RWPE1 (cell line): ENCODE measurements at regions of chr11 and their contacts with region 1.

Region 1: GRCh38 chr11:43845816-43846215 is 34.8 kb upstream of the ALKBH3 start:
- DNase-seq: no peak
- H3K27ac ChIP-seq: no peak overlapping the region
- CTCF ChIP-seq: no peak

Region 2: DNA sequence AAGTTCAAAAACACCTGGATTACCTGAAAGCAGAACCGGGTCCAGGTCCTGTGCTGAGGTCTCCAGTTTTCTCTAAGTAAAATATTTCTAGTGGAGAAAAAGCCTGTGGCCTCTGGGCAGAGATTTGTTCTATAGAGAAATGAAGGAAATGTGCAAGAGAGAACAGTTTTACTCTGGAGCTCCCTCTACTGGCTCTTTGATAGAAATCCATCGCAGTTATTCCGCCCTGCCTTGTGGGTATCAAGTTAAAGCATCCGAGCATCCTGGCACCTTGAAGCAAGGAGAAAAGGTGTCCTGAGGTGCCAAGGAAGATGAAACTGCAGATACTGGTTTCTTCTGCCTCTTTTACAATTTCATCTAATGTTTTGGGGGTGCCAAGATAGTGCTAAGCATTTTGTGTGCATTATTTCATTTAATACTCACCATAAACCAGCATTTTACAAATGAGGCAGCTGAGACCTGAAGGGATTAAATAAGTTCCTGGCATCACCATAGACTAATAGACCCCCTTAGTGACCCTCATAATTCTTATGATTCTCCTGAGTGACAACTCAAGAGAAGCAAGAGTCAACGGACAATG is 278.3 kb before region 1 on chr11:
- CTCF ChIA-PET with region 1: interaction called, 11 read pairs
- POLR2A ChIA-PET with region 1: no interaction called
- DNase-seq: peak; percentile 62
- H3K27ac ChIP-seq: no peak overlapping the region
- CTCF ChIP-seq: peak; percentile 74

Region 3: DNA sequence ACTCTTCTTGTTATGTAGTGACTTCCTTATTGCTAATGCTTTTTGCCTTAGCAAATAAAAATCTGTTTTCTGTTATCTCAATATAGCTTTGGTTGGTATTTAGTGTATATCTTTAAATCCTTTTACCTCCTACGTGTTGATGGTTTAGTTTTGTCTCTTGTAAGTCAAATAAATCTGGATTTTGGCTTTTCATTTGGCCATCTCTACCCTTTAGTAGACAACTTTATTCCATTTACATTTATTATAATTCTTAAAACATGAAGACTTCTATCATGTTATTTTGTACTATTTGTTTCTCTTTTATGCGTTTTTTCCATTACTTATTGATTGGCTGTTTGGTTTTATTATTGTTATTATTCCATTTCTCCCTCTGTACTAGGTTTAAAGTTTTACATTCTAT is 15.3 kb after region 1 on chr11:
- CTCF ChIA-PET with region 1: no interaction called
- POLR2A ChIA-PET with region 1: no interaction called
- DNase-seq: no peak
- H3K27ac ChIP-seq: no peak overlapping the region
- CTCF ChIP-seq: no peak